ENCODE measurements at regions of chr5 and their contacts with region 1.

Region 1: DNA sequence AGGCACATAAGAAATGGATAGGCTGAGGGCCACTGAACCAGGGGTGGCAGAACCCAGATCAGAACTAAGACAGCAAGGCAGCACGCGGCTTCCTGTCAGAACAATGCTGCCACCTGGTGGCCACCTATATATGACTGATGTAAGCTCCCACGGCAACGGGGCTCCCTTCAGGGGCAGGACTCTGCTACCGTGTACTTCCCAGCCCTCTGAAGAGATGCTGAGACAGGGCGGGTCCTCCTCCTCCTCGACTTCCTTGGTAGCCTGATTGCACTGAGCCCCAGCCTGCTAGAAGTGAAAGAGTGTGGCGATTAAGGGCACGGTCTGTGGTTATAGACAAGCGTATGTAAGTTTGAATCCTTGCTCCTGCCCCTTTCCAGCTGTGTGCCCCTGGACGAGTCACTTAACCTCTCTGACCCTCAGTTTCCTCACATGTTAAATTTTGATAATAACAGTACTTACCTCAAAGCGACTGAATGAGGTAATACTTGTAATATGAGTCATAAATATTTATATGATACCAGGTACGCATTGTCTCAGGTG is 13.3 kb downstream of the RPS14 start:
- DNase-seq: peak; percentile 74 to 84
- H3K4me3 ChIP-seq: no peak overlapping the region
- H3K27ac ChIP-seq: no peak overlapping the region
- H3K4me1 ChIP-seq: no peaks in the 10 kb centered on the region
- H3K27me3 ChIP-seq: no peaks in the 10 kb centered on the region
- CTCF ChIP-seq: peak; percentile 93

Region 2: GRCh38 chr5:149834246-149834855 is 601.9 kb before region 1 on chr5:
- CTCF ChIA-PET with region 1: no interaction called
- POLR2A ChIA-PET with region 1: no interaction called
- intact Hi-C with region 1: loop called (anchors 1 kb)
- DNase-seq: peak; percentile 54 to 66
- H3K4me3 ChIP-seq: no peak overlapping the region
- H3K27ac ChIP-seq: no peak overlapping the region
- H3K4me1 ChIP-seq: peaks cover 8% of the 10 kb centered on the region
- H3K27me3 ChIP-seq: no peaks in the 10 kb centered on the region
- CTCF ChIP-seq: peak; percentile 82

Region 3: GRCh38 chr5:150000256-150000989 is 435.8 kb before region 1 on chr5 and contains the starts of genes HMGXB3 and TIGD6:
- CTCF ChIA-PET with region 1: no interaction called
- POLR2A ChIA-PET with region 1: no interaction called
- intact Hi-C with region 1: loop called (anchors 10 kb)
- DNase-seq: peak; percentile 87 to 97
- H3K4me3 ChIP-seq: peak within 1 kb of the TSS; percentile 92
- H3K27ac ChIP-seq: peak within 1 kb of the TSS; percentile 86
- H3K4me1 ChIP-seq: peaks cover 25% of the 10 kb centered on the region
- H3K27me3 ChIP-seq: no peaks in the 10 kb centered on the region
- CTCF ChIP-seq: no peak
- total RNA-seq, gene HMGXB3: 38.0 and 43.1 TPM in 2 replicates
- total RNA-seq, gene TIGD6: 3.0 and 3.9 TPM in 2 replicates

Region 4: GRCh38 chr5:150161242-150162141 is 274.7 kb before region 1 on chr5:
- CTCF ChIA-PET with region 1: interaction called, 4 read pairs
- POLR2A ChIA-PET with region 1: no interaction called
- intact Hi-C with region 1: loop called (anchors 1 kb)
- DNase-seq: peak; percentile 51 to 91
- H3K4me3 ChIP-seq: peak overlapping the region; percentile 18; the same call in 1 of the 2 replicates
- H3K27ac ChIP-seq: no peak overlapping the region
- H3K4me1 ChIP-seq: no peaks in the 10 kb centered on the region; the same call in 1 of the 2 replicates
- H3K27me3 ChIP-seq: no peaks in the 10 kb centered on the region
- CTCF ChIP-seq: peak; percentile 96

Region 5: DNA sequence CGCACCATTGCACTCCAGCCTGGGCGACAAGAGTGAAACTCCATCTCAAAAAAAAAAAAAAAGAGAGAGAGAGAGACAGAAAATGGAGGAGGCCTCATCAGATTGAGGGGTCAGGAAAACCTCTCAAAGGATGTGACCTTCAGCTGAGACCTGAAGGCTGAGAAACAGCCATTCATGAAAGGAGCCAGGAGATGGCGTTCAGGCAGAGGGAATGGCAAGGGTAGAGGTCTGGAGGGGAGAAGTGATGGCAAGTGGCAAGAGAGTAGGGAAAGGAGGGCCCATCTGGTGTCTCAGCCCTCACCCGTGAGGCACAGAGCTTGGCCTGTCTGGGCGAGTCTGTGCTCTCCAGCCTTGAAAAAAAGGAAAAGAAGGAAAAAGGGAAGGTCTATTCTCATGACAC is 163.7 kb before region 1 on chr5:
- CTCF ChIA-PET with region 1: no interaction called
- POLR2A ChIA-PET with region 1: no interaction called
- intact Hi-C with region 1: loop called (anchors 2 kb)
- DNase-seq: peak; percentile 34 to 38
- H3K4me3 ChIP-seq: no peak overlapping the region
- H3K27ac ChIP-seq: no peak overlapping the region
- H3K4me1 ChIP-seq: no peaks in the 10 kb centered on the region
- H3K27me3 ChIP-seq: no peaks in the 10 kb centered on the region
- CTCF ChIP-seq: peak; percentile 46

Region 6: DNA sequence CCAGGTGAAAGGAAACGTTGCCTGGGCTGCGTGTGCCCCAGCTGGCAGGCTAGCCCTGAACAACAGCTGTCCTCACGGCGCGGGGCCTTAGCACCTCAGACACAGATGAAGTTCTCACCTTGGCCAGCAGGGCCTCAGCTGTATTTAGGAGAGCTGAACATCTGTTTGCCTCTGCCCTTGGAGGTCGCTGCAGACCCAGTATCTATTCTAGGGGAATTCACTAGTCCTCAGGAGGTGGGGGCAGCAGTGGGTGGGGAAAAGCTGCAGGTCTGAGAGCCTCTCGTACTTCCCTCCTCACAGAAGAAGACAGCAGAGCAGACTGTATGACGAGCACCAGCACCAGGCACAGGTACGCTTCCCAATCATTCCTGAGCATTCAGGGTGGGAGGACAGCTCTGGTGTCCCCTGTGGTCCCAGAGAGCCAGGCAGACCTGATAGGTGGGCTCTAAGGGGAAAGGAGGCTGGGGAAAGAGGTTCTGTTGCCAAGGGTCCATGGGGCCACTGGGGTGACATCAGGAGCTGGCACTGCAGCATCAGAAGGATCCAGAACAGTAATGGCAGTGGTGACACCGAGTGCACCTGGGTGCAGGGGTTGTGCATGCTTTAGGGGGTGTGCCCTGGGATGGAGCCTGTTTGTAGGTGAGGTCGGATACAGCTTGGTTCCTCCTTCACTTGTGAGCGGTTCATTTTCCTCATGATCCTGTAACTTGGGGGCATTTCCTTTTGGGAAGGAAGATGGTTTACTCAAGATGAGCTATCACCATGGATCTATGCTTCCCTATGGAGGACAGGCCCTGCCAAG is 37.3 kb before region 1 on chr5:
- CTCF ChIA-PET with region 1: no interaction called
- POLR2A ChIA-PET with region 1: no interaction called
- intact Hi-C with region 1: loop called (anchors 5 kb)
- DNase-seq: no peak
- H3K4me3 ChIP-seq: no peak overlapping the region
- H3K27ac ChIP-seq: no peak overlapping the region
- H3K4me1 ChIP-seq: no peaks in the 10 kb centered on the region
- H3K27me3 ChIP-seq: no peaks in the 10 kb centered on the region
- CTCF ChIP-seq: peak; percentile 54; the same call in 1 of the 2 replicates